ENCODE measurements at regions of chr2 and their contacts with region 1.

Region 1: GRCh38 chr2:55771612-55772011 is 78.0 kb upstream of the PNPT1 start:
- DNase-seq: no peak
- H3K4me3 ChIP-seq: no peak overlapping the region
- H3K27ac ChIP-seq: no peak overlapping the region
- H3K4me1 ChIP-seq: no peaks in the 10 kb centered on the region
- H3K27me3 ChIP-seq: no peaks in the 10 kb centered on the region
- CTCF ChIP-seq: peak in 2 of 3 experiments; percentile 20 to 35; a peak in 2 of 4 replicates
- EP300 ChIP-seq: no peak
- POLR2A ChIP-seq: no peak
- RAD21 ChIP-seq: peak in 1 of 2 experiments; percentile 66; a peak in 3 of 4 replicates

Region 2: DNA sequence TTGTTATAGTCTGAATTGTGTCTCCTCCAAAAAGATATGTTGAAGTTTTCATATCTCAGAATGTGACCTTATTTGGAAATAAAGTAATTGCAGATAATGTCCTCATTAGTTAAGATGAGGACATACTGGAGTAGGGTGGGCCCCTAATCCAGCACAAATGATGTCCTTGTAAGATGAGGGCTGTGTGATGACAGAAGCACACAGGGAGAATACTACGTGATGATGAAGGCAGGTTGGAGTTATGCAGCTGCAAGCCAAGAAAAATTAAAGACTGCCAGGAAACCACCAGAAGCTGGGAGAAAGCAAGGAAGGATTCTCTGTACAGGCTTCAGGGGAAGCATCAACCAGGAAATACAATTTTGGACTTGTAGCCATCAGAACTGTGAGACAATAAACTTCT is 19.6 kb before region 1 on chr2:
- CTCF ChIA-PET with region 1: no interaction called
- POLR2A ChIA-PET with region 1: no interaction called
- DNase-seq: no peak
- H3K4me3 ChIP-seq: no peak overlapping the region
- H3K27ac ChIP-seq: no peak overlapping the region
- H3K4me1 ChIP-seq: no peaks in the 10 kb centered on the region
- H3K27me3 ChIP-seq: no peaks in the 10 kb centered on the region
- CTCF ChIP-seq: no peak
- EP300 ChIP-seq: no peak
- POLR2A ChIP-seq: no peak
- RAD21 ChIP-seq: no peak

Region 3: DNA sequence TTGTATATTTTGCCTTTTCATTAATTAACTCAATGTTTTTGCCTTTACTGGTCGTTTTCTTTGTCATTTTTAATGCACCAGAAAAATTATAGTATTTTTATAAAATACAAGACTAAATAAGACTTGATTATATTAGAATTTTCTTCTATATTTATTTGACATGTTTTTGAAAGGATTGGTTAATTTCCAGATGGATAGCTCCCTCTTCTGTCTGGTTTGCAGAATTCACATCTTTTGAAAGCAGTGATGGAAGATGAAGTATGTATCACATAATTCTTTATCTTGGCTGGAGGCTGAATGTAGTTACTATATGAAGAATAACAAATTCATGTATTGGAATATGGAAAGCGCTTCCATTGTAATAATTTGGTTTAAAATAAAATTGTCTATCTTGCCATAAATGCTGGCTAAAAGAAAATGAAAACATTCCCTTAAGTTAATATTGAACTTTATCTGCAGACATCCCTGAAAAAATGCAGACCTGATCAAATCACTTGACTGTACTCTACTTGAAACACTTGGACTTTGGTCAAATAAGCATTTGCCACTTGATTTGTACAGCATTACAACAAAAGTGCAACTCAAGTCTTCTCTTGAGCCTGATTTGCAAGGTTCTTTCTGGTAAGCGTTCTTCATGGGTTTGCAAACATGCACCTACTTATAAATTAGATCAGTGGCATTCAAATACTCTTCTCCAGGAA is 238.3 kb after region 1 on chr2:
- CTCF ChIA-PET with region 1: interaction called, 11 read pairs
- POLR2A ChIA-PET with region 1: no interaction called
- DNase-seq: no peak
- H3K4me3 ChIP-seq: no peak overlapping the region
- H3K27ac ChIP-seq: no peak overlapping the region
- H3K4me1 ChIP-seq: peaks cover 4 to 12% (median 7%) of the 10 kb centered on the region in 4 experiments; a peak in 6 of 7 replicates
- H3K27me3 ChIP-seq: no peaks in the 10 kb centered on the region
- CTCF ChIP-seq: peak in 1 of 3 experiments; percentile 42; a peak in 2 of 4 replicates
- EP300 ChIP-seq: no peak
- POLR2A ChIP-seq: no peak
- RAD21 ChIP-seq: peak; percentile 62 to 72